OCI-LY7 (cell line): ENCODE measurements at regions of chr7 and their contacts with region 1.

Region 1: DNA sequence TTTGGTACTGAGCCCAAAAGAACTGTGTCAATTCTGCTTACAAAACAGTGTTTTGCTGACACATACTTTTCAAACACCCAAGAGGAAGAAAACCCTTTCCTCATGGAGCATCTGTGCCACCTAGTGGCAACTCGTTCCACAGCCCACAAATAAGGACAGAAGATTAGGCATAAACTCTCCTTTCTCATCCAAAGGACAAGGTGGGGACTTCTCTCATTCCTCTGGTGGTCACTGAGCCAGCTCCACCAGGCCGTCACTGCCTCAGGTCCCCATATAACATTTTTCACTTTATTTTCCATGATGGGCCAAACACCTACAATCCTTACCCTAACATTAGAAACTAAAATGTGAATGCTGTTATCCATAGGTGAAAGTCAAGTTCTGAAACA is 76.9 kb downstream of the RNF216 start:
- DNase-seq: peak; percentile 74
- H3K4me3 ChIP-seq: no peak overlapping the region
- H3K27ac ChIP-seq: no peak overlapping the region
- H3K4me1 ChIP-seq: peaks cover 22% of the 10 kb centered on the region
- CTCF ChIP-seq: peak; percentile 98

Region 2: DNA sequence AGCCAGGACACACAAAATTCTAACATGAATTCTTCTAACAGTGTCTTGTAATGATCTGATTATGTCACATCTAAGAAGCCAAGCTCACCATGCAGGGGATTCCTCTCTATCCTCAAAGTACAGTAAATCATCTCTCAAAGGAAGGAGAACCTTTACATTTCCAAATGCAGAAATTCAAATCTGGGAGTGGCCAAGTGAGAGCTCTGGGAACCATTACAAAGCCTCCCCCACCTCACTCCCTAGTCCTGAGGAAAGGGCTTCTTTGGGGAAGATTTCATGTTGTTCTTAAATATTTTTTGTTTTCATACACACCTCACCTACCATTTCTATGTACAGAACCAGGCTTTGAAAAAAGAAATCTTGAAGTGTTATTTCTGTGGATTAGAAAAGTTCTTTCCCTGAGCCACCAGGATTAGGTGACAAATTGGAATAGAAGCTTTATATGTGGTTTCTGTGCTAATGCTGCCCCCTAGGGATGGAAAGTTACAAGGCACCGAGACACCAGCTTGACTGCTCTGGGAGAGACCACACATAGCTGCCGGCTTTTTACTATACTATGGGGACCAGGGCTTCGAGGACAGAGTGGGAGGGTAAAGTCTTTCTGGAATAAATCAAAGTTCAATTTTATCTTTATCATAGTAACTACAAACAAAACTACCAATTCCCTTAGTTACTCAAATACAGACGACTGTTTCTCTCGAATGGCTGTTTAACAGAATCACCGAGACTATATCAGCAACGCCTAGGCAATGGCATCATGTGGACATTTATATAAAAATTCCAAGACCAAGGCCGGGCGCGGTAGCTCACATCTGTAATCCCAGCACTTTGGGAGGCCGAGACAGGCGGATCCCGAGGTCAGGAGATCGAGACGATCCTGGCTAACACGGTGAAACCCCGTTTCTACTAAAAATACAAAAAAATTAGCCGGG is 39.2 kb before region 1 on chr7:
- CTCF ChIA-PET with region 1: no interaction called
- POLR2A ChIA-PET with region 1: interaction called, 3 read pairs
- intact Hi-C with region 1: loop called (anchors 2 kb)
- DNase-seq: peak; percentile 73
- H3K4me3 ChIP-seq: no peak overlapping the region
- H3K27ac ChIP-seq: no peak overlapping the region
- H3K4me1 ChIP-seq: peaks cover 25% of the 10 kb centered on the region
- CTCF ChIP-seq: peak; percentile 97

Region 3: GRCh38 chr7:5677538-5678294 is 26.8 kb before region 1 on chr7:
- CTCF ChIA-PET with region 1: interaction called, 3 read pairs
- POLR2A ChIA-PET with region 1: interaction called, 4 read pairs
- intact Hi-C with region 1: loop called (anchors 1 kb)
- DNase-seq: peak; percentile 71
- H3K4me3 ChIP-seq: no peak overlapping the region
- H3K27ac ChIP-seq: no peak overlapping the region
- H3K4me1 ChIP-seq: no peaks in the 10 kb centered on the region
- CTCF ChIP-seq: peak; percentile 90